Activated naive CD4-positive, alpha-beta T cell treated with anti-CD3 and anti-CD28 coated beads, Interleukin-2, amount 10 ng/mL, durations not matched to agents 7 days and 5 days (primary cell): ENCODE measurements at regions of chr17 and their contacts with region 1.

Region 1: DNA sequence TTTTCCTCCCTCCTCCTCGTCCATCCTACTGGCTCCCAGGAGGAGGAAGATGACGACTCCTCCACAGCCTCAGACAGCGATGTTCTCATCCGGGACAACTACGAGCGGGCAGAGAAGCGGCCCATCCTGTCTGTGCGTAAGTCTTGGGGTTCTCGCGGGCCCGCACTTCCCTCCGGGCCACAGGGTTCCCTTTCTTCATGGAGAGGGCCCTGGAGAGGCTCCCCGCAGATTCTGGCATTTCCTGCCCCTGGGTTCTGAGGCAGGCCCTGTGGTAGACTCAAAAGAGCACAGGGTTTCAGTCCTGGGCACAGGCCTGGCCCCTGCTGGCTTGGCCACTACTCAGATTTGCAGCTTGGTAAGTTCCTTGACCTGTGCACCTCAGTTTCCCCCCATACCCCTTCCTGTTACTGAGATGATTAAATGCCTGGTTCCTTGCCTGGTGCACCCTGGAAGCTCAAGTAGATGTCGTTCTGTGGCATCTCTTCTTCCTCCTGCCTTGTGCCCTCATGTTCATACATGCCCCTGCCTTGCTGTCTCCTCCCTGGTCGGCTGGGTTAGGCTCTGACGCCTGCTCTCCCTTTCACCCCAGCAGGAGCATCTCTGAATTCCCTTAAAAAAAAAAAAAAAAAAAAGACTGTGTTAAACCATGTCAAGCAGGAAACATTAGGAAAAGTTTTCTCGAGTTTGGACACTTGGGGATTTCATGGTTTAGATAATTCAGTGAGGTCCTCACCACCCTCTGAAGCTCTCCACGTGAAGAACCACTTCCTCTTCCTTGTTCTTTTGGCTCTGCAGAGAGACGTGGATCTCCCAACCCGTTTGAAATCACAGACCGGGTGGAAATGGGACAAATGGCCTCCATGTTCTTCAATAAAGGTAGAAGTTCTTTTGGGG is 14.3 kb upstream of the NAT9 start:
- DNase-seq: peak; percentile 38
- H3K4me3 Mint-ChIP-seq: peak overlapping the region; percentile 35
- H3K27ac Mint-ChIP-seq: peak overlapping the region; percentile 88
- H3K4me1 Mint-ChIP-seq: peaks cover 49% of the 10 kb centered on the region
- H3K27me3 Mint-ChIP-seq: no peaks in the 10 kb centered on the region

Region 2: DNA sequence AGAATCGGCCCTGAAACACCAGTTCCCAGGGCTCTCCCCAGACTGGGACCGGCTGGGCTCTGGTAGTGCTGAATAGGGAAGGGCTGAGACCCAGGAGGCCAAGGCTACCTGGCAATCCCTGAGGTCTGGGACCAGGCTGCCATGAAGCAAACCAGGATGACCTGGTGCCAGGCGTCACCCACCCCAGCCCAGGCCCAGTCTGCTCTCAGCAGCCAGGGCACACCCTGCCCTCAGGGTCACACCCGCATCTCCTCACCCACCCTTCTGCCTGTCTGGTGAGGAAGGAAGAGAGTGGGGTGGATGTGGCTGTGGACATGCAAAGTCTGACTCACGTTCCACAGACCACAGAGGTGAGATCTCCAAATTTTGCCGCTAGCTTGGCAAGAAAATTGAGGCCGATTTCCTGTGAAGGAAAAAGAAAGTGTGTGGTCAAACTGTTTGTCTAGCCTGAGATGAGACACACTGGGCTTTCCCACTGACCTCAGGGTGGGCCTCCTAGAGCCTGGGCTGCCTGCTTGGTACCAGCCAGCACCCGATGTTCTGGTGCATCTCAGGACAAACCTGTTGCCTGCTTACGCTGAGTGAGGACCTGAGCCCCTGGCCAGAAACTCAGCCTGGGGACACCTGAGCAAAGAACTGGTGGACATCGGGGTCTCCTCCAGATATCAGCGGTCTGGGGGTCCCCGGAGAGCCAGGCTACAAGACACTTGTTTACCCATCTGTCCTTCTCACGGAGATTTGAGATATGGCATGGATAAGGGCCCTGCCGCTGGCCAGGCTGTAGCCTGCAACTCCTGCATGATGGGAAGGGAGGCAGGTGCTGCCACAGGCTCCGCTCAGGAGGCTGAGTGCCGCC is 59.7 kb before region 1 on chr17:
- CTCF ChIA-PET with region 1: no interaction called
- DNase-seq: peak; percentile 65
- H3K4me3 Mint-ChIP-seq: no peak overlapping the region
- H3K27ac Mint-ChIP-seq: peak overlapping the region; percentile 53
- H3K4me1 Mint-ChIP-seq: peaks cover 32% of the 10 kb centered on the region
- H3K27me3 Mint-ChIP-seq: peaks cover 12% of the 10 kb centered on the region

Region 3: DNA sequence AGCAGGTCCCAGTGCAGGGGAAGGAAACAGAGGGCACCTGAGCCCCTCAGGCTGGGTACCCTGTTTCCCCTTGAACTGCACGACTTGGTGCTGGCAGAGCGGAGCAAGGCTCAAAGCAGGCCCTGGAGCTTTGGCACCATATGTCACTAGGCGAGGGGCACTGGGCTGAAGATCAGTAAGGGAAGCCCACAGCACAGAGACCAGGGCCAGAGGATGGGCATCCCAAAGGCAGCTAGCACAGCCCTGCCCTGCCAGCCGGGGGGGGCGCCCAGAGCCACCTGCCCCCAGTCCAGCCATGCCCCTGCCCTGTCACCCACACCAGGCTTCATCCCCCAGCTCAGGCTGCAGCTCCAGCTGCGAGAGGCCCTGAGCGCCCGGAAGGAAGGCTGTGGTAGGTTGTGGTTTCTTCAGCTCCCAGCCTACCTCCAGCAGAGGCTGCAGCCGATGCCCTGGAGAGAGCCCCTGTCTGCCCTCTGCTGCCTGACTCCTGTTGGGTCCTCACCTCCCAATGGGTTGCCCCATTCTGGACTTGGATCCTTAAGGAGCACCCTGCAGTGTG is 31.1 kb before region 1 on chr17:
- CTCF ChIA-PET with region 1: interaction called, 16 read pairs
- DNase-seq: peak; percentile 80
- H3K4me3 Mint-ChIP-seq: peak overlapping the region; percentile 68
- H3K27ac Mint-ChIP-seq: peak overlapping the region; percentile 91
- H3K4me1 Mint-ChIP-seq: peaks cover 72% of the 10 kb centered on the region
- H3K27me3 Mint-ChIP-seq: no peaks in the 10 kb centered on the region

Region 4: GRCh38 chr17:74807925-74808324 is 17.5 kb after region 1 on chr17:
- CTCF ChIA-PET with region 1: interaction called, 12 read pairs
- DNase-seq: no peak
- H3K4me3 Mint-ChIP-seq: no peak overlapping the region
- H3K27ac Mint-ChIP-seq: no peak overlapping the region
- H3K4me1 Mint-ChIP-seq: no peaks in the 10 kb centered on the region
- H3K27me3 Mint-ChIP-seq: no peaks in the 10 kb centered on the region

Region 5: GRCh38 chr17:74864866-74865395 is 74.5 kb after region 1 on chr17:
- CTCF ChIA-PET with region 1: interaction called, 184 read pairs
- DNase-seq: peak; percentile 80
- H3K4me3 Mint-ChIP-seq: no peak overlapping the region
- H3K27ac Mint-ChIP-seq: no peak overlapping the region
- H3K4me1 Mint-ChIP-seq: peaks cover 23% of the 10 kb centered on the region
- H3K27me3 Mint-ChIP-seq: peaks cover 43% of the 10 kb centered on the region

Region 6: GRCh38 chr17:74935585-74936469 is 145.4 kb after region 1 on chr17 and contains the start of gene OTOP3:
- CTCF ChIA-PET with region 1: no interaction called
- DNase-seq: no peak
- H3K4me3 Mint-ChIP-seq: no peak within 1 kb of the TSS
- H3K27ac Mint-ChIP-seq: no peak within 1 kb of the TSS
- H3K4me1 Mint-ChIP-seq: no peaks in the 10 kb centered on the region
- H3K27me3 Mint-ChIP-seq: peaks cover 97% of the 10 kb centered on the region